Thyroid gland (tissue), 4 donors: ENCODE measurements at regions of chr17 and their contacts with region 1.

Region 1: GRCh38 chr17:38825762-38826247 is 684 bp upstream of the CWC25 start:
- DNase-seq: no peak
- H3K4me3 ChIP-seq: peak overlapping the region in 2 of 3 donors; percentile 65 to 76
- H3K27ac ChIP-seq: peak overlapping the region; percentile 96 to 99 (median 98)
- H3K4me1 ChIP-seq: peaks cover 14 to 16% of the 10 kb centered on the region in 2 donors
- H3K27me3 ChIP-seq: no peaks in the 10 kb centered on the region
- CTCF ChIP-seq: no peak
- POLR2A ChIP-seq: no peak

Region 2: GRCh38 chr17:38853292-38854219 is 27.8 kb after region 1 on chr17 and contains the start of gene RPL23:
- intact Hi-C with region 1: loop called (anchors 2 kb)
- DNase-seq: peak; percentile 97
- H3K4me3 ChIP-seq: peak within 1 kb of the TSS; percentile 12 to 51 (median 35)
- H3K27ac ChIP-seq: peak within 1 kb of the TSS; percentile 84 to 91 (median 85)
- H3K4me1 ChIP-seq: peaks cover 22 to 24% of the 10 kb centered on the region in 2 donors
- H3K27me3 ChIP-seq: no peaks in the 10 kb centered on the region
- CTCF ChIP-seq: no peak
- POLR2A ChIP-seq: peak in 1 of 2 donors; percentile 86
- total RNA-seq, gene RPL23: 1,055 to 2,735 (median 1,279) TPM